ENCODE measurements at regions of chr5 and their contacts with region 1.

Region 1: GRCh38 chr5:82388181-82388580 is 110.0 kb upstream of the RPS23 start:
- DNase-seq: no peak
- H3K4me3 Mint-ChIP-seq: no peak overlapping the region
- H3K27ac Mint-ChIP-seq: peak overlapping the region; percentile 10
- H3K4me1 Mint-ChIP-seq: peaks cover 18% of the 10 kb centered on the region
- H3K27me3 Mint-ChIP-seq: no peaks in the 10 kb centered on the region

Region 2: DNA sequence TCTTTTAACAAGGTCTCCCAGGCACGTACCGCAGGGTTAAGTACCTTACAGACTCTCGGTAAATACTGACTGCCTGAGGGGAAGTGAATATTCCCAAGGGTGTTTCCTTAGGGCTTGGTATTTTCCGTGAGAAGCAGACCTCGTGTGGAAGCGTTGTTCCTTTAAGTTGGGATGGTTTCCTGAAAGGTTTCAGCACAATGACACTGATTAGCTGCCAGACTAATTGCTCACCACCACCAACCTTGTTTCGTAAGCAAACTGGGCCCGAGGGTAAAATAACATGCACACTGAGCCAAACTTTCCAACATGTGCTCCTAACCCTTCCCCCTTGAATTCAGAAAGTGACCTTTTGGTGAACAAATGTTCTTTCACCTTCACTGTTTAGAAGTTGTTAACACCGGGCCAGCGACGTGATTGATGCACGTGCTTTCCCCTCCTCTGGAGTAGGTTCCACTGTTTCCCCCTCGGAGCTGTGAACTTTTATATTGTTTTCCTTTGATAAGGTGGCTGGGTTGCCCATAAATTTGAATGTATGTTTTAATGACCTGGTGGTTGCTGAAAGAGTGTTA is 18.1 kb after region 1 on chr5:
- intact Hi-C with region 1: loop called (anchors 1 kb)
- DNase-seq: no peak
- H3K4me3 Mint-ChIP-seq: no peak overlapping the region
- H3K27ac Mint-ChIP-seq: no peak overlapping the region
- H3K4me1 Mint-ChIP-seq: no peaks in the 10 kb centered on the region
- H3K27me3 Mint-ChIP-seq: no peaks in the 10 kb centered on the region

Measured in activated CD4-positive, alpha-beta T cell treated with anti-CD3 and anti-CD28 coated beads, Interleukin-2, amount 10 ng/mL, durations not matched to agents 24 days and 14 days (primary cell).